Lower leg skin (tissue), 4 donors: ENCODE measurements at regions of chr18 and their contacts with region 1.

Region 1: GRCh38 chr18:6281874-6282273 is 132.8 kb downstream of the L3MBTL4 start:
- DNase-seq: no peak
- H3K4me3 ChIP-seq: no peak overlapping the region
- CTCF ChIP-seq: no peak
- POLR2A ChIP-seq: no peak

Region 2: DNA sequence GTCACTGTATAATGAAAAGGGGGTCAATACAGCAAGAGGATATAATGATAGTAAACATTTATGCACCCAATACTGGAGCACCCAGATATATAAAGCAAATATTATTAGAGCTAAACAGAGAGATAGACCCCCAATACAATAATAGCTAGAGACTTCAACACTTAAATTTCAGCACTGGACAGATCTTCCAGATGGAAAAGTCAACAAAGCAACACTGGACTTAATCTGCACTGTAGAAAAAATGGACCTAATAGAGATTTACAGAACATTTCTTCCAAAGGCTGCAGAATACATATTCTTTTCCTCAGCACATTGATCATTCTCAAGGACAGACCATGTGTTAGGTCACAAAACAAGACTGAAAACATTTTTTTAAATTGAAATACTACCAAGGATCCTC is 1013.0 kb before region 1 on chr18:
- intact Hi-C with region 1: no loop called
- DNase-seq: no peak
- H3K4me3 ChIP-seq: no peak overlapping the region
- CTCF ChIP-seq: no peak
- POLR2A ChIP-seq: no peak

Region 3: DNA sequence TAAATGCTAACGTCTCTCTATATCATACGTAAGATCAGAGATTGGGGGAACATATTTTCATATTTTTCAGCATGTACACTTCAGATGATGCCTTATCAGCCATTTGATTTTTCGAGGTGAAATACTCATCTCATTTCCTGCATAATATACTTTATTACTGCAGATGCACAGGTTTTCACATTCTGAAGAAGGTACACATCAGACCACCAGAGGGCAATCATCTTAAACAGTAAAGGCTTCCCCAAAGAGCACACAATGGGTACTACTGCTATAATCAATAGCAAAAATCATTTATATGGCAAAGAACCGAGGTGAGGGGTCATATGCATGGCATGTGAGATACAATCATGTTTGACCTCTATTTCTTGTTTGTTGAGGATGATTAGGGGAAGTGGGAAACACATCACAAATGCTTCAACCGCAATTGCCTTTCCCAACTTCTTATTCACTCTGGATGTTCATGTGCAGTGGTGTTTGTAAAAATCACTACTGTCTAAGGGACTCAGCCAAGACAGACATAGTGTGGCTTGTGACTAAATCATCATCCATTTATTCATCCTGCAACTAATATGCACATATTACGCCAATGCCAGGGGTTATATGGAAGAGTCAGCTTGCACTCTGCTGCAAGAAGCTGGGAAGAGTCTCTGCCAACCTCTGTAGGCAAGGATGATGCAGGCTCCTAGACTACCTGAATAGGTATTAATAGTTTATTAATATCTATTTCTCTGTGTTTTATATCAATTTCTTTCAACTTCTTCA is 856.8 kb before region 1 on chr18:
- intact Hi-C with region 1: loop called (anchors 5 kb)
- DNase-seq: no peak
- H3K4me3 ChIP-seq: no peak overlapping the region
- CTCF ChIP-seq: no peak
- POLR2A ChIP-seq: no peak

Region 4: GRCh38 chr18:6537475-6537874 is 255.6 kb after region 1 on chr18:
- intact Hi-C with region 1: no loop called
- DNase-seq: no peak
- H3K4me3 ChIP-seq: no peak overlapping the region
- CTCF ChIP-seq: no peak
- POLR2A ChIP-seq: no peak